ENCODE measurements at regions of chr17 and their contacts with region 1.

Region 1: GRCh38 chr17:64202675-64203344 is 60.2 kb downstream of the TEX2 start:
- DNase-seq: peak; percentile 29
- H3K4me3 Mint-ChIP-seq: no peak overlapping the region
- H3K27ac Mint-ChIP-seq: peak overlapping the region; percentile 55
- H3K4me1 Mint-ChIP-seq: peaks cover 42% of the 10 kb centered on the region
- H3K27me3 Mint-ChIP-seq: no peaks in the 10 kb centered on the region
- CTCF ChIP-seq: no peak

Region 2: DNA sequence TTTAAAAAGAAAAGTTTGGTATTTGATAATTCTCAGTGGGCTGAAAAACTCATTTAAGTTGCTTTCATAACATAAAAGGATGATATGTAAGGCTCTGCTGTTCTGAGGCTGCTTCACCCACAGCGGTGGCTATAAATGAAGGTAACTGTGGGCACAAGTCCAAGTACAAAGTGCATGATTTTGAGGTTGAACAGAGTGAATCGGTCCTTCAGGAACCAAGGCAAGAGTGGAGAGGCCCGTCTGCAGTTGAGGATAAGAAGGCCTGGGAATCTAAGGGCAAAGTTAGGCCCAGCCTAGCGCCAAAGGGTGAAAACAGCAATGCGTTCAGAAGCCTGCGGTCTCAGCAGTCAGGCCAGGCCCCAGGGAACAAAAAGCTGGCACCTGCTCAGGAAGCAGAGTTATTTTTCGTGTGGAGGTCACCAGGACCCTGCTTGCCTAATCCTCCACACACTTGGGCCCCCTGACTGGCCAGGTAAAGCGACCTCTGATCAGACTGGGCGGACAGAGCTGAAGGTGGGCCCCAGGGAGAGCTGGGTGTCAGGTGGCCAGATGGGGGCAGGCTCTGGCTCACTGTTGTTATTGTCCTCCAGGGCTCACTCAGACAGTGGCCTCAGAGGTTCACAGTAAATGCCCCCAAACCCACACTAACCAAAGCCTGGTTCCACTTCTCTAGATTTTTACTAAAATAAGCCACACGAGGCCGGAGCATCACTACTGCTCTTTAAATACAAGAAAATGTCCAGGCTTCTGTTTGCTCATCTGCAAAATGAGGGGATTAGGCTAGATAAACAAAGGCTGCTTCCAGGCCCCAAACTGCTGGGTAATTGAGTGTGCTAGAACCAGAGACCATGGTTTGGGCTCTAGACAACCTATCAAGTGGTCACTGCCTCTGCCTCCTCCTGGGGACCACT is 13.8 kb after region 1 on chr17:
- CTCF ChIA-PET with region 1: interaction called, 9 read pairs
- POLR2A ChIA-PET with region 1: interaction called, 32 read pairs
- intact Hi-C with region 1: no loop called
- DNase-seq: peak; percentile 43
- H3K4me3 Mint-ChIP-seq: no peak overlapping the region
- H3K27ac Mint-ChIP-seq: peak overlapping the region; percentile 89
- H3K4me1 Mint-ChIP-seq: peaks cover 38% of the 10 kb centered on the region
- H3K27me3 Mint-ChIP-seq: no peaks in the 10 kb centered on the region
- CTCF ChIP-seq: no peak

Region 3: DNA sequence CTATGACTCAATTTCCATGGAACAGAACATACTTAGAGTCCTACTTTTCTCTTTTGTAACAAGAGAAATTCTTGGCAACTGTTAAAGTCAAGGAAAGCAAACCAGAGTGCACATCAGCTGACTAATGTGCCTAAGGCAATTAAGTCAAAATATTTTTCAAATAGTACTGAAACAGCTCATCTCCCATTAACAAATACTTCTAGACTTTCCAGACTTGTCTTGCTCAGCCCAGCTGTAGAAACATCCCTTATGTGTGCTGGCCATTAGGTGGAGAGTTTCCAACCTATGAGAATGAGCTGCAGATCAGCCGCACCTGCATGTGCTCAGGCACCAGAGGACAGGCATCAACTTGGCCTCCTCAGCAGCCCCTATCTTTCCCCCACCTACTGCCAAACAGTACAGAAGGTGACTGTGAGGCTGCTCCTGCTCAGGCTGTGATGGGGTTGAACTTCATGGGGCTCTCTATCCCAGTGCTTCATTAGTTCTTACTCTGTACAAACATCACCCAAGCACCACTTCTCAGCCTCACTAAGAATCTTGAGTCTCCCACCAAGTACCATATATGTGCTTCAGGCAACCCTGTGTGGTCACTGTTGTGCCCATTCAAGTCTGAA is 28.1 kb after region 1 on chr17:
- CTCF ChIA-PET with region 1: interaction called, 3 read pairs
- POLR2A ChIA-PET with region 1: interaction called, 187 read pairs
- intact Hi-C with region 1: no loop called
- DNase-seq: peak; percentile 90
- H3K4me3 Mint-ChIP-seq: peak overlapping the region; percentile 29
- H3K27ac Mint-ChIP-seq: peak overlapping the region; percentile 91
- H3K4me1 Mint-ChIP-seq: peaks cover 32% of the 10 kb centered on the region
- H3K27me3 Mint-ChIP-seq: no peaks in the 10 kb centered on the region
- CTCF ChIP-seq: no peak

Measured in MCF 10A (cell line).